GM10248 (cell line): ENCODE measurements at regions of chr18 and their contacts with region 1.

Region 1: GRCh38 chr18:47737956-47738355 is 192.5 kb downstream of the SMAD2 start:
- DNase-seq: no peak
- CTCF ChIP-seq: no peak

Region 2: DNA sequence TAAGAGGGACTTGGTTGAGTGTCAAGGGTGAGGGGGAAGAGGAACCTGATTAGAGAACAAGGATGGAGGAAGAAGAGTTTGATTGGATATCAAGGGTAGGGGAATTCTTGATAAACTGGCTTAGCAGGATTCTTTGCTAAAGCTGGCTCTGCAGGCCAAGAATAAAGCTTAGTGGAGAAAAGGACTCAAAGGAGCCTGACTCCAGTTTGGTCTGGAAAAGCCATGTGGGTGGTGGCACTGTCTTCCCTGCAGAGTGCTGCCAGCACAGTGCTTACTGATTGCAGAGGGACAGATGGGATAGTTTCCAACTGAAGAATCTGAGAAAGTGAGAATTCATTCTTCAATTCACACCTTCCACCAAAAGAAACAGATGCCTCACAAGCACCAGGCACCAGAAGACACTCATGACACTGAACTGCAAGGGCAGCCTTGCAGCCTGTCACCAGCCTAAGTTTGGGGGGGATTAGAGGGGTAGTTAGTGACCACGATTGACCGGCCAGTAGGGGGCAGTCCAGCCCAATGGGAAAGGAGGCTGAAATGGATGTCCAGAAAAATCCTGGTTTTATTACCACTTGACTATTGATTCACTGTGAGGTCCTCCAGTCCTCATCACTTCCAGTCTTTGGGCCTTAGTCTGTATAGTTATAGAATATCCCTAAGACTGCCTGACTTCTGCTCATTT is 142.0 kb before region 1 on chr18:
- CTCF ChIA-PET with region 1: interaction called, 10 read pairs
- POLR2A ChIA-PET with region 1: no interaction called
- DNase-seq: peak; percentile 65
- CTCF ChIP-seq: peak; percentile 70

Region 3: GRCh38 chr18:47669815-47670214 is 68.1 kb before region 1 on chr18:
- CTCF ChIA-PET with region 1: no interaction called
- POLR2A ChIA-PET with region 1: no interaction called
- DNase-seq: no peak
- CTCF ChIP-seq: no peak

Region 4: GRCh38 chr18:47701133-47701532 is 36.8 kb before region 1 on chr18:
- CTCF ChIA-PET with region 1: no interaction called
- POLR2A ChIA-PET with region 1: no interaction called
- DNase-seq: no peak
- CTCF ChIP-seq: no peak

Region 5: DNA sequence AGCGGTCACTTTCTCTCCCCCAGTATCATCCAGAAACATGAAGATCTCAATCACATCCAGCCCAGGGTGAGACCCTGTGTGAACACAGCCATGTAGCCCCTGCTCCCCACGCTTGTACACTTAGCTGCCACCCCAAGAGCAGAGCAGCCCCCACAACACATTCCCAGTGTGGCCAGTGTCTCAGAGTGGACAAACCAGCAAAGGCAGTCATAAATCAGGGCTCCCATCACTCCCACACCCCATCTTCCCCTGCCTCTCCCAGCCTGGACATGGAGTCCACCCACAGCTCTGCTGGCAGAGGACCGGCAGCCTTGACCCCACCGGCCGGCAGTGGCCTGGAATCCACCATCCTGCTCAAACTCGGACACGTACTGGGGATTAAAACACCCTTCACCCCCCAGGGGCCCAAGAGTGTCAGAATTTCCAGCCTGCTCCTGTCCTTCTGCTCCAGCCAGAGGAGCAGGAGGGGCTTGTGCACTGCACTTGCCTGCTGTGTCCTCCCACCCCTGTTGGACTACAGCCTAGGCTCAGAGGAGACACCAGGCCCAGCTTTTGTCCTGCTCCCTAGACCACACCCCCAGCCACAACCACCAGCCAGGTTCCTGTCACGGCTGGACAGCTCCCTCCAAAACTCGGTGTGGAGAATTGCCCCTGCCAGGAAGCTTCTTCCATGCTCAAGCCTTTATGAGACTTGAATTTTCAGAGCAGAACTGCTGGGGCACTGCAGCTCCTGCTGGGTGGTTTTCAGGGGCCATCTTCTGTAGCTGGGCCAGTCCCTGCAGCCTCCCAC is 13.6 kb before region 1 on chr18:
- CTCF ChIA-PET with region 1: no interaction called
- POLR2A ChIA-PET with region 1: no interaction called
- DNase-seq: no peak
- CTCF ChIP-seq: no peak

Region 6: GRCh38 chr18:47815486-47816280 is 77.7 kb after region 1 on chr18:
- CTCF ChIA-PET with region 1: no interaction called
- POLR2A ChIA-PET with region 1: no interaction called
- DNase-seq: no peak
- CTCF ChIP-seq: no peak